ENCODE measurements at regions of chr6 and their contacts with region 1.

Region 1: DNA sequence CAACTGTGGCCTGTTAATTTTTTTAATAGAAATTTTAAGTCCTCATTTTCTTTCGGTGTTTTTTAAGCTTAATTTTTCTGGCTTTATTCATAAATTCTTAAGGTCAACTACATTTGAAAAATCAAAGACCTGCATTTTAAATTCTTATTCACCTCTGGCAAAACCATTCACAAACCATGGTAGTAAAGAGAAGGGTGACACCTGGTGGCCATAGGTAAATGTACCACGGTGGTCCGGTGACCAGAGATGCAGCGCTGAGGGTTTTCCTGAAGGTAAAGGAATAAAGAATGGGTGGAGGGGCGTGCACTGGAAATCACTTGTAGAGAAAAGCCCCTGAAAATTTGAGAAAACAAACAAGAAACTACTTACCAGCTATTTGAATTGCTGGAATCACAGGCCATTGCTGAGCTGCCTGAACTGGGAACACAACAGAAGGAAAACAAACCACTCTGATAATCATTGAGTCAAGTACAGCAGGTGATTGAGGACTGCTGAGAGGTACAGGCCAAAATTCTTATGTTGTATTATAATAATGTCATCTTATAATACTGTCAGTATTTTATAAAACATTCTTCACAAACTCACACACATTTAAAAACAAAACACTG is 10.1 kb downstream of the HFE start:
- DNase-seq: peak; percentile 37 to 86 (median 68)
- ATAC-seq: peak; percentile 80 to 92
- H3K4me3 Mint-ChIP-seq: no peak overlapping the region
- H3K27ac Mint-ChIP-seq: peak overlapping the region in 1 of 10 donors; percentile 70
- H3K4me1 Mint-ChIP-seq: peaks cover 2 to 9% (median 4%) of the 10 kb centered on the region in 4 donors
- H3K27me3 Mint-ChIP-seq: no peaks in the 10 kb centered on the region

Region 2: GRCh38 chr6:24385536-24386269 is 1711.7 kb before region 1 on chr6:
- POLR2A ChIA-PET with region 1: no interaction called
- DNase-seq: no peak
- ATAC-seq: no peak
- H3K4me3 Mint-ChIP-seq: no peak overlapping the region
- H3K27ac Mint-ChIP-seq: no peak overlapping the region
- H3K4me1 Mint-ChIP-seq: peaks cover 0 to 6% (median 0%) of the 10 kb centered on the region in 4 donors
- H3K27me3 Mint-ChIP-seq: peaks cover 4 to 23% (median 16%) of the 10 kb centered on the region in 5 donors

Region 3: GRCh38 chr6:26065952-26066380 is 31.4 kb before region 1 on chr6:
- POLR2A ChIA-PET with region 1: interaction called, 24 read pairs
- DNase-seq: peak in 8 of 10 donors; percentile 43 to 74 (median 66)
- ATAC-seq: peak; percentile 93 to 97
- H3K4me3 Mint-ChIP-seq: no peak overlapping the region
- H3K27ac Mint-ChIP-seq: no peak overlapping the region
- H3K4me1 Mint-ChIP-seq: peaks cover 2 to 10% (median 6%) of the 10 kb centered on the region in 4 donors
- H3K27me3 Mint-ChIP-seq: no peaks in the 10 kb centered on the region

Measured in naive thymus-derived CD8-positive, alpha-beta T cell (primary cell).